Heart left ventricle (tissue), 16 donors: ENCODE measurements at regions of chr3 and their contacts with region 1.

Region 1: DNA sequence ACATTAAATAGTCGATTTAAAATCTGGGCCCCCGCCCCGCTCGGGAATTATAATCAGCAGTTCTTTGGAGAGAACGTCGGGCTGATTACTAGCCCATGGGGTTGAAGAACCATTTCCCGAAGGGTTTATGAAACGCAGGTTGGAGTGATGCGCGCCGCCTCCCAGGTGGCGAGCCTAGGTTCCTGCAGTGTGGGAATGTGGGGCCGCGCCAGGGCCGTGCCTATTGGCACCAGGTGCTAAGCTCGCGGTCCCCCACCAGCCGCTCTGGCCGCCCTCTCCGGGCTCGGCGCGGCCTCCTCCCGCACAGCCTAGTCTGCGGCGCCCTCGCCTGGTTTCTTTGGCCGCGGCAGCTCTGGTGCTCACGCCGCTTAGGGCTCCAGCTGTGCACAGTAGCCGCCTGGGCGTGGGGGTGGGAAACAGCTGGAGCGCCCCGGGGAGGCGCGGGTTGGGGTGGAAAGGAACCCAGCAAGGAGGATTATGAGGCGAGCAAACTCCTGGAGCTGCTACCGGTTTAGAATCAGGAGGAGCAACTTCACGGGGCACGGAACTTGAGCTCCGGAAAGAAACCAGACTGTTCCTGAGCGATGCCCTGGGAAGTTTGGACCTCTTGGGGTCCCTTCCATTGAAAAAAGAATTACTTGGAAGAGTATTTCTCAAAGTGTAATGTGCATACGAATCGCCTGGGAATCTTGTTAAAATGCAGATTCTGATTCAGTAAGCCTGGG is 5.6 kb upstream of the MECOM start:
- DNase-seq: peak; percentile 75 to 86 (median 79)
- ATAC-seq: peak; percentile 98 to 99 (median 98)
- H3K4me3 ChIP-seq: peak overlapping the region; percentile 1 to 68 (median 58)
- H3K27ac ChIP-seq: peak overlapping the region; percentile 1 to 78 (median 58)
- H3K4me1 ChIP-seq: peaks cover 0 to 28% (median 7%) of the 10 kb centered on the region in 12 donors
- H3K27me3 ChIP-seq: peaks cover 8 to 92% (median 52%) of the 10 kb centered on the region in 9 donors
- CTCF ChIP-seq: peak; percentile 67 to 93 (median 82)
- POLR2A ChIP-seq: peak in 1 of 2 donors; percentile 11

Region 2: DNA sequence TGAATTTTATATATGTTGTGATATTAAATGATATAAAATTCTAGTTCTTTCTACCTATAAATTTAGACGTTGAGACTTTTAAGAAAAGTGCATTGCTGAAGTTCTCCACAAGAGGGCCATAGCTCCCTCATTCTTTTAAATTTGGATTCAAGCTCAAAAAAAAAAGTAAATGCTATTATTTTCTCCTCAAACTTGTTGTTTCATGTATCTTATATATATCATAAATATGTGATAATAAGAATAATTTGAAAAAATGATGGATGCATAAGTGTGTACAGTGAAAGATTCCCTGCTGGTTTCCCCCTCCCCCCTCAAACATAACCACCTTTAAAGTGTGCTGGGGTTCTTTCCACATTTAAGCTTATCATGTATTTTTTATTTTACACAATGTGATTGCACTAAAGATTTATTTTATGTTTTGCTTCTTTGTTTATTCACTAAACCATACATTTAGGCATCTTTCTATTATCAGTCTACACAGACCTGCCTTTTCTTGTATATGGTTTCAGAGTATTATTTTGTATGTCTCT is 804.0 kb before region 1 on chr3:
- intact Hi-C with region 1: loop called in 6 of 10 experiments (anchors 5 to 10 kb)
- DNase-seq: no peak
- ATAC-seq: no peak
- H3K4me3 ChIP-seq: peak overlapping the region in 4 of 12 donors; percentile 5 to 35 (median 17)
- H3K27ac ChIP-seq: no peak overlapping the region
- H3K4me1 ChIP-seq: no peaks in the 10 kb centered on the region
- H3K27me3 ChIP-seq: no peaks in the 10 kb centered on the region
- CTCF ChIP-seq: peak; percentile 61 to 90 (median 77)
- POLR2A ChIP-seq: no peak

Region 3: DNA sequence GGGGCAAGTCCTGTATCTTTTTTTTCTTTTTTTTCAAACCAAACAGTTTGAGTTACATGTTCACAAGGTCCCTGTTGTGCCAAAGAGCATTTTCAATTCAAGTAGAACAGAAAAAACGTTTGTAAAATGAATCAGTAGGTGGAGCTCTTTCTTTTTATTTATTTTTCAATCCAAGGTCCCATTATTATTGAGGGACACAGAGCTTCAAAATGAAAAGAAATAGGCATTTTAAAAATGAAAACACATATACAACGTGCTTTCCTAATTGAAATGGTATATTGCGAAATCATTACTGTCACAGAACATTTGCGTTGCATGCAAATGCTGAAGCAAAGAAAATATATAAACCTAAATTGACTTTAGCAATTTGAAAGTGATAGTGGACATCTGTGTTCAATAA is 716.6 kb before region 1 on chr3:
- intact Hi-C with region 1: loop called in 2 of 10 experiments (anchors 5 to 10 kb)
- DNase-seq: no peak
- ATAC-seq: no peak
- H3K4me3 ChIP-seq: no peak overlapping the region
- H3K27ac ChIP-seq: no peak overlapping the region
- H3K4me1 ChIP-seq: no peaks in the 10 kb centered on the region
- H3K27me3 ChIP-seq: no peaks in the 10 kb centered on the region
- CTCF ChIP-seq: peak in 7 of 12 donors; percentile 11 to 42 (median 25)
- POLR2A ChIP-seq: no peak

Region 4: GRCh38 chr3:169133178-169134161 is 535.6 kb before region 1 on chr3:
- intact Hi-C with region 1: loop called in 1 of 10 experiments (anchors 5 kb)
- DNase-seq: no peak
- ATAC-seq: peak in 3 of 4 donors; percentile 46 to 78 (median 55)
- H3K4me3 ChIP-seq: peak overlapping the region in 1 of 12 donors; percentile 9
- H3K27ac ChIP-seq: peak overlapping the region in 7 of 12 donors; percentile 6 to 61 (median 33)
- H3K4me1 ChIP-seq: peaks cover 0 to 47% (median 3%) of the 10 kb centered on the region in 12 donors
- H3K27me3 ChIP-seq: peaks cover 0 to 10% (median 0%) of the 10 kb centered on the region in 9 donors
- CTCF ChIP-seq: peak; percentile 19 to 63 (median 50)
- POLR2A ChIP-seq: no peak

Region 5: DNA sequence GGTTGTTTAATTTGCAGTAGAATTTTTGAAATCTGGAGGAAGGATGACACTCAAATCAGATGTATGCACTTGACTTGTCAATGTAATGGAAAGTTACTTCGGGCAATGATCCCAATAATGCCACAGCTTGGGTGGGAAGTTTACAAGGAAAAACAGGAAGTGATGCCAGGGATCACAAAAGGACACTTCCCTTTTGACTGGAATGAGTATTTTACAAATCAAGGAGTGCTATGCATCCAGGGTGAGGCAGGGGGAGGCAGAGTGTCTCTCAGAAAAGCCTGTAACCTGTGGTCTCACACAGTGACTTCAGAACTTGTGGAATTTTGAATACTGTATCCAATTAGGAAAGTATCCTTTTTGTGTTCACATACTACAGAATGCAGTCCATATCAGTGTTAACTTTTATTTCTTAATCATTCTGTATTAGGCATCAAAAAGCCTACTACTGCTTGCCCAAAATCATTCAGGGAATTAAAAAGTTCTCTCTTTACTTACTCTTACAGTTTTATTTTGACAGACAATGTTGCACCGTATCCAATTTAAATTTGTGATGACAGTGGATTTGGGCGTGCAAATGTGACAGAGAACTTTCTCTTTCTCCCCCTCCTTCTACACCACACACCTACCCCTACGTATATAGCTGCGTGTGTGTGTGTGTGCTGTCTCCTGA is 450.7 kb before region 1 on chr3:
- intact Hi-C with region 1: loop called in 7 of 10 experiments (anchors 5 to 10 kb)
- DNase-seq: peak in 4 of 5 donors; percentile 30 to 60 (median 42)
- ATAC-seq: peak; percentile 61 to 84 (median 80)
- H3K4me3 ChIP-seq: no peak overlapping the region
- H3K27ac ChIP-seq: peak overlapping the region in 2 of 12 donors; percentile 4 to 21
- H3K4me1 ChIP-seq: peaks cover 0 to 10% (median 1%) of the 10 kb centered on the region in 12 donors
- H3K27me3 ChIP-seq: no peaks in the 10 kb centered on the region
- CTCF ChIP-seq: peak; percentile 44 to 79 (median 62)
- POLR2A ChIP-seq: no peak

Region 6: GRCh38 chr3:169286214-169286613 is 382.9 kb before region 1 on chr3:
- intact Hi-C with region 1: loop called in 4 of 10 experiments (anchors 10 kb)
- DNase-seq: no peak
- ATAC-seq: no peak
- H3K4me3 ChIP-seq: no peak overlapping the region
- H3K27ac ChIP-seq: peak overlapping the region in 5 of 12 donors; percentile 9 to 39 (median 20)
- H3K4me1 ChIP-seq: peaks cover 0 to 18% (median 6%) of the 10 kb centered on the region in 12 donors
- H3K27me3 ChIP-seq: no peaks in the 10 kb centered on the region
- CTCF ChIP-seq: no peak
- POLR2A ChIP-seq: no peak

Region 7: GRCh38 chr3:169390271-169391230 is 278.6 kb before region 1 on chr3:
- intact Hi-C with region 1: loop called in 3 of 10 experiments (anchors 5 to 10 kb)
- DNase-seq: no peak
- ATAC-seq: no peak
- H3K4me3 ChIP-seq: no peak overlapping the region
- H3K27ac ChIP-seq: peak overlapping the region in 4 of 12 donors; percentile 21 to 59 (median 32)
- H3K4me1 ChIP-seq: peaks cover 0 to 39% (median 16%) of the 10 kb centered on the region in 12 donors
- H3K27me3 ChIP-seq: no peaks in the 10 kb centered on the region
- CTCF ChIP-seq: peak in 4 of 12 donors; percentile 9 to 30 (median 26)
- POLR2A ChIP-seq: no peak

Region 8: GRCh38 chr3:170132335-170132734 is 463.2 kb after region 1 on chr3:
- intact Hi-C with region 1: no loop called
- DNase-seq: no peak
- ATAC-seq: peak in 2 of 4 donors; percentile 9 to 29
- H3K4me3 ChIP-seq: no peak overlapping the region
- H3K27ac ChIP-seq: no peak overlapping the region
- H3K4me1 ChIP-seq: peaks cover 0 to 13% (median 0%) of the 10 kb centered on the region in 12 donors
- H3K27me3 ChIP-seq: no peaks in the 10 kb centered on the region
- CTCF ChIP-seq: no peak
- POLR2A ChIP-seq: no peak